SK-N-SH (cell line): ENCODE measurements at regions of chr22 and their contacts with region 1.

Region 1: DNA sequence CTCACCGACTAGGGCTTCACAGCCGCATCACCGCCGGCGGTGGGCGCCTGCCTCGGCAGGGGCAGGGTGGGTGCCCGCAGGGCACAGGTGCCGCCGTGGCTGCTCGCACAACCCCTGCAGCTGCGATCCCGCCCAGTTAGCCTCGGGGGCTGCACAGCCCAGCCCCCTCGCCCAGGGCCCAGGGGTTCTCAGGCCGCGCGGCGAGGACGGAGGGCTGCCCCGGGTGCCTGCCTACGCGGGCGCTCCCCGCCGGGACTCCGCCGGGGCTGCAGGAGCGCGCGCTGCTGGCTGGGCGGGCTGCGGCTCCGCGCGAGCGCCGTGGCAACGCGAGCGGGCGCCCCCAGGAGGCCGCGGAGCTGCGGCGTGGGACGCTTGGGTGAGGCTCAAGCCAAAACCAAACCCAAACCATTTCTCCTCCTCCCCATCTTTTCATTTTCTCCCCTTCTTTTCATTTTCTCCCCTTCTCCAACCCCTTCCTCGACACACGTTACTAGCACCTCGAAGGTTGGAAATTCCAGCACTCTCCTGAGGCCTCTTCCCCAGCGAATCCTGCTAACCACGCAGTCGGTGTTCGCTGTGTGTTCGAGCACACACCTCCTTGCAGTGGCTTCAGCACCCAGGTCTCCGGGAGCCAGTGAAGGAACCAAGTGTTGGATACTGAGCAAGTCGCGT is at the start of gene MICAL3:
- DNase-seq: peak; percentile 93
- H3K4me3 ChIP-seq: peak within 1 kb of the TSS; percentile 79 to 84
- H3K27ac ChIP-seq: peak within 1 kb of the TSS; percentile 39 to 62; a peak in 3 of 4 replicates
- H3K4me1 ChIP-seq: peaks cover 0 to 10% of the 10 kb centered on the region in 2 experiments; a peak in 1 of 4 replicates
- H3K27me3 ChIP-seq: no peaks in the 10 kb centered on the region
- CTCF ChIP-seq: peak; percentile 63
- EP300 ChIP-seq: no peak; a peak in 1 of 4 replicates
- RAD21 ChIP-seq: peak; percentile 64
- polyA plus RNA-seq, gene MICAL3: 50.9 and 83.1 TPM in 2 replicates

Region 2: DNA sequence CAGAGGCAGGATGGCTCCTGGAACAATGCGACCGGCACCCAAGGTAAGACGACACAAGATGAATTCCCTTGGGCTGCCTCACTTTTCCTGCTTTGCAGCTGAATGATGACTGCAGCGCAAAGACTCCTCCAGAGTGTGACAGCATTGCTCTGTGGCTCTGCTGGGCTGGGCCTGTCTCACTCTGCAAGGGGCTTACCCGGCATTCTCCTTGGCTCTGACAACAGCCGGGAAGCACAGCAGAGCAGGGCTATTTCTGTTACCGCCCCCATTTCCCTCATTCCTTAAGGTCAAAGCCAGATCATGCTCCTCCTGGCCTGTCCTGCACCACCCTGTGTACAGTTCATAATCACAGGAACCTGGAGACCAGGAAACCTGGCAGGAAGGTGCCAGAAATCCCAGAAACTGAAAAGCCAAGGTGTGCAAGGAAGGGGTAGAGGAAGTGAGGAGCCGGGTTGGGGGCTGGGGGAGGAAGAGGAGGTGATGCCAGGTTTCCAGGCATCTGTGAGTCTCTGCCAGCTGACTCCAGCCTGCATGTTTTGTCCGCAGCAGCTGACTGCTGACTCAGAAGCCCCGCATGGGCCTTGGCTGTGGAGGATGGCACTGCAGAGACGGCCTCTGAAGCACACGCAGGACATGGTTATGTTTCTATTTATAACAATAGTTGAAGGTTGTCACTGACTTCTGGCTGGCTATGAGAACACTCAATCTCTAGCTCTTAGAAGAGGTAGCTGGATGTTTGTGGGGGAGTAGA is 113.7 kb before region 1 on chr22:
- CTCF ChIA-PET with region 1: interaction called, 24 read pairs
- POLR2A ChIA-PET with region 1: no interaction called
- DNase-seq: peak; percentile 68
- H3K4me3 ChIP-seq: peak overlapping the region in 1 of 2 experiments; percentile 57; a peak in 2 of 4 replicates
- H3K27ac ChIP-seq: peak overlapping the region; percentile 60 to 94
- H3K4me1 ChIP-seq: peaks cover 20 to 33% of the 10 kb centered on the region in 2 experiments
- H3K27me3 ChIP-seq: no peaks in the 10 kb centered on the region
- CTCF ChIP-seq: peak; percentile 66
- EP300 ChIP-seq: peak in 1 of 2 experiments; percentile 55; a peak in 1 of 4 replicates
- RAD21 ChIP-seq: peak; percentile 88

Region 3: DNA sequence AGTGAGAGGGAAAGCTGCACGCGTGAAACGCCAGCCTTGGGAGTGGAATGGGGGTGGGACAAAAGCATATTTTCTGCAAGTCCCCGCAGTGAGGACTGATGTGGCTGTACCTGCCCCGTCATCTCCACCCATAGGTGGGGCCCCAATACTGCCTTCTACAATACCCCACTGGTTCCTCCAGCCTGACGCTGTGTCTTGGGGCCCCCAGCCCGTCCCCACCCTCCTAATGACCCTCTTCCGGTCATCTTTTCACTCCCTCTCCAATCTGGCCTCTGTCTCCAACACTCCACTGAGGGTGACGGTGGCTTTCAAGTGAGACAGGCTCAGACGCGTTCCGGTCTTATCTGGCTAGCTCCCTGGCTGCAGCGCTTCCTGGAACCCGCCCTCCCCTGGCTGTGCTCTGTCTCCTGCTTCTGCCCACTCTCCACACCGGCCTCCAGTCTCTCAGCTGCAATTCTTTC is 104.2 kb before region 1 on chr22:
- CTCF ChIA-PET with region 1: interaction called, 14 read pairs
- POLR2A ChIA-PET with region 1: no interaction called
- DNase-seq: peak; percentile 79
- H3K4me3 ChIP-seq: no peak overlapping the region
- H3K27ac ChIP-seq: peak overlapping the region in 1 of 2 experiments; percentile 92; a peak in 2 of 4 replicates
- H3K4me1 ChIP-seq: peaks cover 23 to 59% of the 10 kb centered on the region in 2 experiments
- H3K27me3 ChIP-seq: no peaks in the 10 kb centered on the region
- CTCF ChIP-seq: no peak
- EP300 ChIP-seq: no peak
- RAD21 ChIP-seq: peak; percentile 15

Region 4: GRCh38 chr22:18001040-18001893 is 23.1 kb before region 1 on chr22:
- CTCF ChIA-PET with region 1: interaction called, 16 read pairs
- POLR2A ChIA-PET with region 1: no interaction called
- DNase-seq: peak; percentile 95
- H3K4me3 ChIP-seq: peak overlapping the region; percentile 69 to 92
- H3K27ac ChIP-seq: peak overlapping the region; percentile 84 to 97
- H3K4me1 ChIP-seq: peaks cover 4 to 6% of the 10 kb centered on the region in 2 experiments; a peak in 2 of 4 replicates
- H3K27me3 ChIP-seq: no peaks in the 10 kb centered on the region
- CTCF ChIP-seq: peak; percentile 54
- EP300 ChIP-seq: no peak
- RAD21 ChIP-seq: peak; percentile 52

Region 5: GRCh38 chr22:18013947-18014346 is 10.5 kb before region 1 on chr22:
- CTCF ChIA-PET with region 1: interaction called, 10 read pairs
- POLR2A ChIA-PET with region 1: no interaction called
- DNase-seq: no peak
- H3K4me3 ChIP-seq: no peak overlapping the region
- H3K27ac ChIP-seq: no peak overlapping the region
- H3K4me1 ChIP-seq: peaks cover 0 to 7% of the 10 kb centered on the region in 2 experiments; a peak in 1 of 4 replicates
- H3K27me3 ChIP-seq: no peaks in the 10 kb centered on the region
- CTCF ChIP-seq: no peak
- EP300 ChIP-seq: no peak
- RAD21 ChIP-seq: no peak